SK-N-SH (cell line): ENCODE measurements at regions of chr10 and their contacts with region 1.

Region 1: DNA sequence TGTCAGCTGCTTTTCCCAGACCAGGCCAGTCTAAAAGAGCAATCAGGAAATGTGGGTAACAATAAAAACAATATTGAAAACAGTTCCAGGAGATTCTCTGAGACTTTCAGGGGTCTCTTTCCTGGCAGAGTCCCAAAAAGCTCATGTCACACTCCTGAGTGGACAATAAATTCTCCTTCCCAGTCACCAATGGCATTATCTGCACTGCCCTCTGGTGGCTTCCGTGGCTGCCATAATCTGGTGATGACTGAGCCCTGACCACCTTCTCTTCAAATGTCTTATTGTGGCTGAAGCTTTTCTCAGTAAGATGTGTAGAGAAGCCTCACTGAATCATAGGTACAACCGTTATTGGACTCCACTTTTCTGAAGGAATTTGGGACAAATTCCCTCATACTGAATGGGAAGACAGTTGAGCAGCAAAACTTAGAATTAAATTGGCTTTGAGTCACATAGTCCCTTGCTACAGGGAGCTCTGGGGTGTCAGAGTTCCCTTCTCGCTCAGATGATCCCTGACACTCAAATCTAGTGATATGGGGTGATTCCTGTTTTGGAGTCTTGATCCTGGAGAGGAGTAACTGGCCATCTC is 24.4 kb upstream of the ASAH2 start:
- DNase-seq: peak; percentile 5
- H3K4me3 ChIP-seq: no peak overlapping the region
- H3K27ac ChIP-seq: no peak overlapping the region
- H3K4me1 ChIP-seq: no peaks in the 10 kb centered on the region
- H3K27me3 ChIP-seq: no peaks in the 10 kb centered on the region
- CTCF ChIP-seq: peak; percentile 64
- EP300 ChIP-seq: no peak
- RAD21 ChIP-seq: peak; percentile 39; the same call in 1 of the 2 replicates

Region 2: GRCh38 chr10:50021646-50022045 is 254.1 kb before region 1 on chr10:
- CTCF ChIA-PET with region 1: no interaction called
- POLR2A ChIA-PET with region 1: no interaction called
- DNase-seq: no peak
- H3K4me3 ChIP-seq: no peak overlapping the region
- H3K27ac ChIP-seq: no peak overlapping the region
- H3K4me1 ChIP-seq: peaks cover 0 to 6% of the 10 kb centered on the region in 2 experiments; a peak in 1 of 4 replicates
- H3K27me3 ChIP-seq: no peaks in the 10 kb centered on the region
- CTCF ChIP-seq: no peak
- EP300 ChIP-seq: no peak
- RAD21 ChIP-seq: no peak

Region 3: GRCh38 chr10:50260791-50261281 is 14.9 kb before region 1 on chr10:
- CTCF ChIA-PET with region 1: interaction called, 11 read pairs
- POLR2A ChIA-PET with region 1: no interaction called
- DNase-seq: no peak
- H3K4me3 ChIP-seq: no peak overlapping the region
- H3K27ac ChIP-seq: no peak overlapping the region
- H3K4me1 ChIP-seq: no peaks in the 10 kb centered on the region
- H3K27me3 ChIP-seq: no peaks in the 10 kb centered on the region; the same call in 1 of the 2 replicates
- CTCF ChIP-seq: no peak
- EP300 ChIP-seq: no peak
- RAD21 ChIP-seq: no peak

Region 4: GRCh38 chr10:50577681-50578350 is 302.1 kb after region 1 on chr10:
- CTCF ChIA-PET with region 1: no interaction called
- POLR2A ChIA-PET with region 1: no interaction called
- DNase-seq: no peak
- H3K4me3 ChIP-seq: no peak overlapping the region
- H3K27ac ChIP-seq: peak overlapping the region; percentile 56 to 71
- H3K4me1 ChIP-seq: peaks cover 15 to 25% of the 10 kb centered on the region in 2 experiments
- H3K27me3 ChIP-seq: no peaks in the 10 kb centered on the region
- CTCF ChIP-seq: no peak
- EP300 ChIP-seq: no peak
- RAD21 ChIP-seq: no peak